Ascending aorta (tissue), 2 donors: ENCODE measurements at regions of chr15 and their contacts with region 1.

Region 1: GRCh38 chr15:67839929-67840748 is at the start of gene RNU6-1:
- DNase-seq: peak; percentile 86 to 98
- H3K4me3 ChIP-seq: peak within 1 kb of the TSS; percentile 65 to 96
- H3K27ac ChIP-seq: peak within 1 kb of the TSS; percentile 94 to 98
- H3K4me1 ChIP-seq: peaks cover 5 to 17% of the 10 kb centered on the region in 2 donors
- H3K27me3 ChIP-seq: peaks cover 2% of the 10 kb centered on the region
- CTCF ChIP-seq: peak in 1 of 3 experiments; percentile 30
- total RNA-seq, gene RNU6-1: not detected

Region 2: DNA sequence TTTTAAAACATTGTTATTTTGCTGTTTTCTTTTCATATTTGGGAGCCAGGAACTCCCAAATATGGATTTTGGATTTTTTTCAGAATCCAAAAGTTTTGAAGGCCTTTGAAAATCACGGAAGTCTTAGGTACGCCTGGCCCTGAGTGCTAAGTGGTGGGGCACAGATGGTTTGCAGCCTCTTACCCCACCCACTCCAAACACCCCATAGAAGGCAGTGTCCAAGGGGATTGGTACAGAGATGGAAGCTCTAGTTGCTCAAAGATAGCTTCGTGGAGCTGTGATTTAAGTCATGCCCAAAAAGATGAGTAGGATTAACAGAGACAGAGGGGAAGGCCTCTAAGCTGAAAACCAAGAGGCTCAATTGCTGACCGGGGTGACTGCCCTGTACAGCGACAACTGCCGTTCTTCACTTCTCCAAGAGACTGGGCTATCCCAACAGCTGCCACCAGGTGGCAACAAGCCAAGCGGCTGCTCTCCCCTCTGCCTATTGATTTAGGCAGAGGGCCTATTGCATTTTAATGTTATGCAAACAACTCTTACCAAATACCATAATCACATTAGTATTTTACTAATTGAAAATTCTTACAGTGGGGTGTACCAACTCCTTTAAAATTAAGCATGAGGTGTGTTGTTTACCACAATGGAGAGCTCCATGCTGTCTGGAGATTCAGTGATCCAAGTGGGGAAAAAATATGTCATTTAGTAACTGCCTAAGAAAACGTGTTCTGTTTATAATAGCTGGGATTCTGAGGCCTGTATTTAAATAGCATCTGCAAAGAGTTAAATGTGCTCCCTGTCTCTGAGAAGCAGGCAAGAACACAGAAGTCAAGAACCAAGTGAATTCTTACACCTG is 383.2 kb before region 1 on chr15:
- intact Hi-C with region 1: loop called (anchors 5 kb)
- DNase-seq: peak in 1 of 2 donors; percentile 84
- H3K4me3 ChIP-seq: no peak overlapping the region
- H3K27ac ChIP-seq: no peak overlapping the region
- H3K4me1 ChIP-seq: no peaks in the 10 kb centered on the region
- H3K27me3 ChIP-seq: no peaks in the 10 kb centered on the region
- CTCF ChIP-seq: peak; percentile 60 to 75 (median 71)

Region 3: DNA sequence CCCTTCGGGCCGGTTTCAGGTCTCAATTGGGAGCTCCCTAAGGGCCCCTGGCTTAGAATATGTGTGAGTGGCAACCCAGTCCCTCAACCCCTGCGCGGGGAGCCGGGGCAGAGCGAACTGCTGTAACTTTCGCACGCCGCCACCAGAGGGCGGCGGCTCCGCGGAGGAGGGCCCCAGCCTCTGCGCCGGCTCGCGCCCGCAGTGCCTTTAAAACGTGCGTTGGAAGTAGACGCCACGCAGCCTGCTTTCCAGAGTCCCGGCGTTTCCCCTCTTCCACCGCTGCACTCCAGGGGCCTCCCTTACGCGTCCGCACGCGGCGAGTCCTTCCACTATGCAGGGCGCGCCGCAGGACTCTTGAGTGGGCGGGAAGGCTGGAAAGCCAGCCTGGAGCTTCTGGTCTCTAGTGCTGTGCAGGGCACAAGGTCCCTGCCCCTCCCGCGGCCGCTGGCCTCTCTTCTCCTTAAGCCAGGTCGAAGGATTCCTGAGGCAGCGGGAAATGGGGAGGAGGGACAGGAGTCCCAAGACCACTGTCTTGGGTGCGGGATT is 23.4 kb after region 1 on chr15:
- intact Hi-C with region 1: loop called (anchors 1 kb)
- DNase-seq: peak in 1 of 2 donors; percentile 85
- H3K4me3 ChIP-seq: peak overlapping the region; percentile 55 to 60
- H3K27ac ChIP-seq: peak overlapping the region; percentile 55 to 57
- H3K4me1 ChIP-seq: peaks cover 3 to 7% of the 10 kb centered on the region in 2 donors
- H3K27me3 ChIP-seq: no peaks in the 10 kb centered on the region
- CTCF ChIP-seq: peak; percentile 91 to 97 (median 96)

Region 4: DNA sequence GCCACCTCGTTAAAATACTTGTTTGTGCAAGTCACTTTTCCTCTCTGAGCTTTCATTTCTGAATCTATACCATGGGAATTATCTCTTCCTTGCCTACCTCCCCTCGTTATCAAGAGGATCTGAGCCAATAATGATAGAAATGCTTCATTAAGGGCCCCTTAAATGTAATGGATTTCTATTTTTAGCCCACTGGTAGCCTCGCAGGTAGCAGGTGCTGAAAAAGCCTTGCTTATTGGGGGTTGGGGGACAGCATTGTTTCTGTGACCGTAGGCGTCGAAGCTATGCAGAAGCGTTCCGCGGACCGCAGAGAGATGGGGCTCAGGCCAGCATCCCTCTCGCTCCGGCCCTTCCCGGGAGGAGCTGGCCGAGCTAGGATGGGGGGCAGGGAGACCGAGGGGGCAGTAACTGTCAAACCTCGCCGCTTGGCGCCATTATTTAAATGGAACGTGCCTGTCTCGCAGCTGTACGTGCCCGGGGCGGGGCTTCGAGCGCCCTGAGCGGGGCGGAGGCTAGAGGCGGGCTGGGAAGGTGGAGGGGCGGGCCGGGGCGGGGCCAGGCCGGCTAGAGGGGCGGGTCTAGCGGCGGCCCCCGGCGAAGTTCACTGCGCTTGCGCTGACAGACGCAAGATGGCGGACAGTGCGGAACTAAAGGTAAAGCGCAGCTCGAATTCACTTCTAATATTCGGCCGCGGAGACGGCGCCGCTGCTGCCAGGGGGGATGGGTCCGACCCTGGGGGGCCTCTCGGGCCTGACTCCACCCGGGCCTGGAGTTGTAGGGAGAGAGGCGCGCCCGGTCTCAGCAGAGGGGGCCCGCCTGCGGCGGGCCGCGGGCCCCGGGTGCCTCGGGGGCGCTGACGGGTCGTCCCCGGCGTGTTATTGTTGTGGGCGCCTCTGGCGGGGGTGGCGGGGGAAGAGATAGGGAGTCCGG is 213.8 kb after region 1 on chr15 and contains the start of gene PIAS1:
- intact Hi-C with region 1: loop called (anchors 1 kb)
- DNase-seq: peak; percentile 80 to 97
- H3K4me3 ChIP-seq: peak within 1 kb of the TSS; percentile 79 to 99
- H3K27ac ChIP-seq: peak within 1 kb of the TSS; percentile 83 to 92
- H3K4me1 ChIP-seq: peaks cover 0 to 6% of the 10 kb centered on the region in 2 donors
- H3K27me3 ChIP-seq: no peaks in the 10 kb centered on the region
- CTCF ChIP-seq: peak in 1 of 3 experiments; percentile 48
- total RNA-seq, gene PIAS1: 17.1 TPM

Region 5: GRCh38 chr15:68418611-68419161 is 578.5 kb after region 1 on chr15:
- intact Hi-C with region 1: no loop called
- DNase-seq: peak in 1 of 2 donors; percentile 61
- H3K4me3 ChIP-seq: no peak overlapping the region
- H3K27ac ChIP-seq: peak overlapping the region; percentile 62 to 68
- H3K4me1 ChIP-seq: peaks cover 10 to 33% of the 10 kb centered on the region in 2 donors
- H3K27me3 ChIP-seq: no peaks in the 10 kb centered on the region
- CTCF ChIP-seq: no peak